ENCODE measurements at regions of chr18 and their contacts with region 1.

Region 1: GRCh38 chr18:864872-865273 is 39.8 kb upstream of the ADCYAP1 start:
- DNase-seq: peak; percentile 78
- H3K4me3 Mint-ChIP-seq: no peak overlapping the region
- H3K27ac Mint-ChIP-seq: no peak overlapping the region
- H3K4me1 Mint-ChIP-seq: no peaks in the 10 kb centered on the region
- H3K27me3 Mint-ChIP-seq: no peaks in the 10 kb centered on the region
- CTCF ChIP-seq: peak; percentile 99

Region 2: GRCh38 chr18:961644-962355 is 96.9 kb after region 1 on chr18:
- CTCF ChIA-PET with region 1: interaction called, 15 read pairs
- POLR2A ChIA-PET with region 1: no interaction called
- intact Hi-C with region 1: loop called (anchors 1 kb)
- DNase-seq: peak; percentile 43
- H3K4me3 Mint-ChIP-seq: peak overlapping the region; percentile 47
- H3K27ac Mint-ChIP-seq: no peak overlapping the region
- H3K4me1 Mint-ChIP-seq: peaks cover 11% of the 10 kb centered on the region
- H3K27me3 Mint-ChIP-seq: peaks cover 11% of the 10 kb centered on the region
- CTCF ChIP-seq: peak; percentile 85

Region 3: GRCh38 chr18:1513519-1513918 is 648.6 kb after region 1 on chr18:
- CTCF ChIA-PET with region 1: interaction called, 5 read pairs
- POLR2A ChIA-PET with region 1: no interaction called
- intact Hi-C with region 1: loop called (anchors 2 kb)
- DNase-seq: no peak
- H3K4me3 Mint-ChIP-seq: no peak overlapping the region
- H3K27ac Mint-ChIP-seq: no peak overlapping the region
- H3K4me1 Mint-ChIP-seq: no peaks in the 10 kb centered on the region
- H3K27me3 Mint-ChIP-seq: no peaks in the 10 kb centered on the region
- CTCF ChIP-seq: peak; percentile 10

Region 4: GRCh38 chr18:2083691-2084090 is 1218.8 kb after region 1 on chr18:
- CTCF ChIA-PET with region 1: interaction called, 3 read pairs
- POLR2A ChIA-PET with region 1: no interaction called
- intact Hi-C with region 1: loop called (anchors 5 kb)
- DNase-seq: peak; percentile 42
- H3K4me3 Mint-ChIP-seq: no peak overlapping the region
- H3K27ac Mint-ChIP-seq: no peak overlapping the region
- H3K4me1 Mint-ChIP-seq: peaks cover 8% of the 10 kb centered on the region
- H3K27me3 Mint-ChIP-seq: no peaks in the 10 kb centered on the region
- CTCF ChIP-seq: peak; percentile 54